ENCODE measurements at regions of chr11 and their contacts with region 1.

Region 1: GRCh38 chr11:122711831-122712381 is 56.4 kb downstream of the UBASH3B start:
- DNase-seq: peak; percentile 67
- H3K4me3 ChIP-seq: no peak overlapping the region
- H3K27ac ChIP-seq: peak overlapping the region; percentile 64 to 82
- H3K4me1 ChIP-seq: peaks cover 11 to 45% of the 10 kb centered on the region in 2 experiments; a peak in 3 of 4 replicates
- H3K27me3 ChIP-seq: no peaks in the 10 kb centered on the region
- CTCF ChIP-seq: peak; percentile 48
- EP300 ChIP-seq: peak; percentile 72
- RAD21 ChIP-seq: peak; percentile 54

Region 2: DNA sequence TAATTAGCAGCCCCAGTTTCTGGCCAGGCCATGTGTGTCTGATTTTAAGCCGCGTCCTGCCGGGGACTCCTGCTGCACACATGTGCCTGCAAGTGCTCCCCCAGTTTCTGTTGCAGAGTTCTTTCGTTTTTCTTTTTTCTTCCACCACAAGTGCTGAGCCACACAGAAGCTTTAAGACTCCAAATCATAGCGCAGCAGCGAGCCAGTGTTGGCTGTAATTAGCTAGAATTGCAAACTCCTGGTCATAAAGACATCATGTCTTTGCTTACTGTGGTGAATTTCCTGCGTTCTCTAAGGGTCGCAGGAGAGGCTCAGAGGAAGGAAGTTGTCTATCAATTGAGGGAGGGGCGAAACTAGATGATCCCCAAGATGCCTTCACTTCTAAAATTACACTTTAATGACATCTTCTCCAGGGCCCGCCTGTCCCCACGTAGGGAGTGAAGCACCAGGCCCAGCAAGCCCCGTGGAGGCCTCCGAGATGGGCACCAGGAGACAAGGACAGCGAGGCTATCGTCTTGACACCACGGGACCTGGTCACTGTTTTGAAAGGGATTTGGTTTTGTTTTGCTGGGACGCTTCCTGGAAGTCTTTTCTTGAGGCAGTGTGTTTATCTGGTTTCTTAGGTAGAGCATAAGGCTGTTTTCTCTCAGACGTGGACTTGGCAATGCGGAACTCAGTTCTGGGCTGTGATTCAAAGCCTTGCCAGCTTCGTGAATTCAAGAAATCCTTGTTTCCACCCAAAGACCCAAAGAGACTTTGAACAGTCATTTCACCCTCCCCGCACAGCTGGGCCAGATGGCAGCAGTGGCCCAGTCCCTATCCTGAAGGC is 15.4 kb after region 1 on chr11:
- CTCF ChIA-PET with region 1: interaction called, 13 read pairs
- POLR2A ChIA-PET with region 1: no interaction called
- DNase-seq: peak; percentile 30
- H3K4me3 ChIP-seq: no peak overlapping the region
- H3K27ac ChIP-seq: no peak overlapping the region
- H3K4me1 ChIP-seq: peaks cover 10 to 27% of the 10 kb centered on the region in 2 experiments; a peak in 3 of 4 replicates
- H3K27me3 ChIP-seq: no peaks in the 10 kb centered on the region
- CTCF ChIP-seq: no peak
- EP300 ChIP-seq: no peak
- RAD21 ChIP-seq: no peak

Region 3: DNA sequence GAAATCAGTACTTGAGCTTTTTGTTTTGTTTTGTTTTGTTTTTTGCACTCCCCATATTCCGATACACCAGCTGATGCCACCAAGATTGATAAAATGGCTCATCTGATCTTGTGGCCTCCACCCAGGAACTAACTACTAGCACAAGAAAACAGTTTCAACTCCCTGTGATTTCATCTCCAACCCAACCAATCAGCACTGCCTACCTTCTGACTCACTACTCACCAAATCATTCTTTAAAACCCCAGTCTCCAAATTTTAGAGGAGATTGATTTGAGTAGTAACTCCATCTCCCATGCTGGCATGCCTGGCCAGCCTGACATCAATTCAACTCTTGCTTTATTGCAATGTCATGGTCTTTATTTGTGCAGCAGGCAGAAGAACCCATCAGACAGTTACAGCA is 110.3 kb after region 1 on chr11:
- CTCF ChIA-PET with region 1: no interaction called
- POLR2A ChIA-PET with region 1: no interaction called
- DNase-seq: no peak
- H3K4me3 ChIP-seq: no peak overlapping the region
- H3K27ac ChIP-seq: no peak overlapping the region
- H3K4me1 ChIP-seq: no peaks in the 10 kb centered on the region
- H3K27me3 ChIP-seq: no peaks in the 10 kb centered on the region
- CTCF ChIP-seq: no peak
- EP300 ChIP-seq: no peak
- RAD21 ChIP-seq: no peak

Region 4: DNA sequence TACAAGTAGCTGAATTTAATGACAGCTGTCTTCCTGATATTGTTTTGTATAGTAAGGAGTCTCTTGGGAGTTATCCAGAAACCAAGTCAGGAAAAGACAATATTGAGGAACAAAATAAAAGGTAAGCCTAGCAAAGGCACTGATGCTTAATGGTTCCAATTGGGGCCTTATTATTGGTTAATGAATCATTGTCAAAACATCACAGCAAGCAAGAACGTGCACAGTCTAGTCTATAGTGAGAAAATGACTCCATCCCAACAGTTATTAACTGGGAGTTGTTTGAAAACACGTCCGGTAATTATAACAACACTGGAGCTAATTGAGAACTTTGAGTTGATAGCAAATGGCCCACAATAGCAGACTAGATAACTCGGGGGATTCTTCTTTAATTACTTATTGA is 252.1 kb after region 1 on chr11:
- CTCF ChIA-PET with region 1: no interaction called
- POLR2A ChIA-PET with region 1: no interaction called
- DNase-seq: no peak
- H3K4me3 ChIP-seq: no peak overlapping the region
- H3K27ac ChIP-seq: no peak overlapping the region
- H3K4me1 ChIP-seq: no peaks in the 10 kb centered on the region
- H3K27me3 ChIP-seq: no peaks in the 10 kb centered on the region
- CTCF ChIP-seq: no peak
- EP300 ChIP-seq: no peak
- RAD21 ChIP-seq: no peak